ENCODE measurements at regions of chr2 and their contacts with region 1.

Region 1: GRCh38 chr2:165874445-165875039 is 79.0 kb downstream of the TTC21B start:
- DNase-seq: no peak
- H3K4me3 Mint-ChIP-seq: no peak overlapping the region
- H3K27ac Mint-ChIP-seq: no peak overlapping the region
- H3K4me1 Mint-ChIP-seq: peaks cover 24% of the 10 kb centered on the region
- H3K27me3 Mint-ChIP-seq: no peaks in the 10 kb centered on the region

Region 2: DNA sequence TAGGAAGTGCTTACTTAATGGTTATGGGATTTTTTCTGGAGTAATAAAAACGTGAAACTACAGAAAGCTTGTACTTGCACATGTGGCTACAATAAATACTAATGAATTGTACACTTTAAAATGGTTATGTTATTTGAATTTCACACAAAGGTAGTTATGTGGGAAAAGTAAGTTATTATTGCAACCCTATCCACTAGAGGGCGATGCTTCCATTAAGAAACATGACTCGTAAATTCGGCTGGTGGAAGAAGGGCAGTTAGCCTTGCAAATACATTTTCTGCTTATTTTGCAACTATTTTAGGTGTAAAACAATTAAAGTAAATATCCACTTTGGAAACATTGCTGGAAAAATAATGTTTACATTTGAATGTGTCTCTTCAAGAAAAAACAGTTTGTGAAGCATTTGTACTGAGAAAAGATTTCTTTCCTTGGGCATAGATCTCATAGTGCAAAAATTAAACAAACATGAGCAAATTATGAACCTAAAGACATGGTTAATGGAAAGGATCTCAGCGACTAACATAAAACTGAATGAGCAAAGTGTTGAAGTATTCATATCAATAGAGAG is 473.2 kb before region 1 on chr2:
- intact Hi-C with region 1: loop called (anchors 1 kb)
- DNase-seq: no peak
- H3K4me3 Mint-ChIP-seq: no peak overlapping the region
- H3K27ac Mint-ChIP-seq: no peak overlapping the region
- H3K4me1 Mint-ChIP-seq: peaks cover 5% of the 10 kb centered on the region
- H3K27me3 Mint-ChIP-seq: peaks cover 20% of the 10 kb centered on the region

Region 3: GRCh38 chr2:165698444-165698894 is 176.1 kb before region 1 on chr2:
- intact Hi-C with region 1: loop called (anchors 10 kb)
- DNase-seq: no peak
- H3K4me3 Mint-ChIP-seq: no peak overlapping the region
- H3K27ac Mint-ChIP-seq: no peak overlapping the region
- H3K4me1 Mint-ChIP-seq: no peaks in the 10 kb centered on the region
- H3K27me3 Mint-ChIP-seq: peaks cover 15% of the 10 kb centered on the region

Region 4: DNA sequence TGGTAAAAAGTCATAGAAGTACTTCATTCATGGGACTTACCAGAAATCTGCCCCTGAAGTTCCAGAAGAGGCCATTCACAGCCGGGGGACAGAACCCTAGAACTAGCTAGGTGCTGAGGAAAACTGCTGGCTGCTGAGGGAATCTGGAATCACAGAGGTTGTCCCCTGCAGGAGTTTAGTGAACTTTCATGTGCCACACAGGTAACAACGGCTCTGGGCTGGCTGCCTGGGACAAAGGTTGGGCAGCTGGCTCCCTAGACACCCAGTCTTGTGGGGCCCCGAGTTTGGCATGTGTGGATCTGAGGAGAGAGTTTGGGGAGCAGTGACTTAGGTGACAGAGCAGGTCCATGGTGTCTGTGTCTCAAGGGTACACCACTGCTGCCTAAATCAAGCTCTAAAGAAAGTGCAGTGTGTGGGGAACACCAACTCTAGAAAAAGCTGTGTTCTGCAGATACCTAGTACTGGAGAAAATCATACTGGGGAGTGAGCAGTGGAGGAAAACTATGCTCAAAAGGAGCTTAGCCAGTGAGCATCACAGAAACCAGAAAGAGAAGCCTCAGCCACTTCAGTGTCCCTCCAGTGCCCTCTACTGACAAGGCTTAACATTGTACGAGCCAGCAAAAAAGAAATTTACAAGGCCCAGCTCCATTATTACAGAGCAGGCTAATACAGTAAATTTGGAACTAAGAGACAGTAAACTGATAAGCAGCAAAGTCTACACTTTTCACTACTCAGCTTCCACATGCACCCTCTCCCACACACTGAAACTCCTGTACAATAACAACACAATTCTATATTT is 95.7 kb before region 1 on chr2:
- intact Hi-C with region 1: loop called (anchors 5 kb)
- DNase-seq: no peak
- H3K4me3 Mint-ChIP-seq: no peak overlapping the region
- H3K27ac Mint-ChIP-seq: peak overlapping the region; percentile 64
- H3K4me1 Mint-ChIP-seq: peaks cover 25% of the 10 kb centered on the region
- H3K27me3 Mint-ChIP-seq: no peaks in the 10 kb centered on the region

Region 5: DNA sequence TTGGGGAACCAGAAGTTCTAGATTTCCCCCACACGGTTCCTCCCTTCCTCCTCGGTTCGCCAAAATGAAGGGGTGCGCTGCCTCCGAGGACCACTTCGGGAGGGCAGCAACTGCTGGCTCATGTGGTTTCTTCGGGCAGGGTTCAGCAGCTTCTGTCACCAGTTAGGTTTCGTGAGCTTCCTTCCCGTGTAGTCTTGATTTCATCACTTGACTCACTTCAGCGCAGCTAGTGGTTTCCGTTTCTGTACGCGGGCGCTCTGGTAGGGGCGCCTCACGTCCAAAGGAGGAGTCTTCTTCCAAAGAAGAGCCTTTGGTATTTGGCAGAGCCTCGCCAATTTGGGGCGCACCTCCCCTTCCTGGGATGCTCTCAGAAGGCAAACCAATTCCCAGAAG is 80.0 kb before region 1 on chr2:
- intact Hi-C with region 1: loop called (anchors 1 kb)
- DNase-seq: peak; percentile 76
- H3K4me3 Mint-ChIP-seq: peak overlapping the region; percentile 93
- H3K27ac Mint-ChIP-seq: peak overlapping the region; percentile 96
- H3K4me1 Mint-ChIP-seq: peaks cover 54% of the 10 kb centered on the region
- H3K27me3 Mint-ChIP-seq: no peaks in the 10 kb centered on the region

Measured in activated T-helper 2 cell treated with anti-CD3 and anti-CD28 coated beads, Interferon-gamma antibody, Interleukin-2, Interleukin-4, amounts not matched to agents 10 μg/mL and 5 μg/mL and 100 μg/mL, durations not matched to agents 14 hours and 24 hours and 36 hours (primary cell).